ENCODE measurements at regions of chr13 and their contacts with region 1.

Region 1: DNA sequence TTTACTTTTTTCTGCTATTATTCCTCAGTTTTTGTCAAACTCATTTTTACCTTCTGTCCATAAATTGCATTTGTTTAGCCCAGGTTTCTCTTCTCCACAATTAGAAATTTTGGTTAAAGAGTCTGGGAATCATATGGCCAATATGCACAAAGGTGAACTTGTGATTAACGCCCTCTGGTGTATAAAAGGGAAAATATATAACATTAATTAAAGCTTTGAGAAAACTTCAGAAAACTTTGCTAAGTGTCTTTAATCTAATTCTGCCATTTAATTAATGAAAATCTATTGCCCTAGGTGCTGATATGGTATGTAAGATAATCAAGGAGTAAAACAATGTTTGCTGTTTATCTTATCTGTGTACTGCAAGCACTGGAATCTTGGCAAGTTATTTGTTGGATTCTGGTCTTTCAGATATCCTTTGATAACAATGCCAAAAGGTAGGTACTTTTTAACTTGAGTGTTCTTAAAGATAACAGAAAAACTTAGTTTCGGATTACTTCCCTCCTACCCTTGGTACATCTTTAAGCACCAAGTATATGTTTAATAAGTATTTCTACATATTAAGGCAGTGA is 402.6 kb downstream of the SUCLA2 start:
- DNase-seq: peak; percentile 13
- ATAC-seq: no peak
- H3K4me3 ChIP-seq: no peak overlapping the region
- H3K27ac ChIP-seq: no peak overlapping the region
- H3K4me1 ChIP-seq: no peaks in the 10 kb centered on the region; the same call in 1 of the 2 replicates
- H3K27me3 ChIP-seq: no peaks in the 10 kb centered on the region
- CTCF ChIP-seq: peak; percentile 53
- POLR2A ChIP-seq: no peak
- RAD21 ChIP-seq: peak; percentile 59

Region 2: DNA sequence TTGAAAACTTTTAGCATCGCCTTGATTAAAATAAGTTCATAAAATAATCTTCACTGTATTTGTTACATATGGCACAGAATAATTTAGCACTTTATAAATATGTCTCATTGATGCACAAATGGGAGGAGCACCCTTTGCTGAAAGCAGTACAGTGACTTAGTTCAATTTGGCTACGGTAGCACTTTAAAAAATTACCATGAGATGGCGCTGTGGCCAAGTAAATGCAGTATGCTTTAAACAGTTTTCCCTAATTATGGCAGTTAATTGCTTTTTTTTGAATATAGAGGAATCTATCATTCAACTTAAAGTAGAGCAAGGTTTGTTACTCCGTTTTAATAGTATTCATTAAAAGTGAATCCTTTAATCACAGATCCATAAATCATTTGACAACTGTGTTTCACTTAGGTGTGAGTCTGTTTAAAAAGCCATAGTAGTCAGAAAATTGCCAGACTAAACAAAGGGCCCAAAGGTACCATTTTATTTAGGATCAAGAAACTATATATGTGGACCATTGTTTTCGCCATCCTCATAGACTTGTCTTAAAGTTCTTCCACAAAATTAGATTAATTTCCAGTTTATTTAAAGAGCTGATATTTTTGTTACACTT is 766.7 kb before region 1 on chr13:
- CTCF ChIA-PET with region 1: no interaction called
- POLR2A ChIA-PET with region 1: no interaction called
- dilution Hi-C with region 1: no loop called
- in situ Hi-C with region 1: no loop called
- intact Hi-C with region 1: loop called (anchors 2 kb)
- DNase-seq: peak; percentile 58
- ATAC-seq: peak; percentile 79; the same call in 1 of the 2 replicates
- H3K4me3 ChIP-seq: no peak overlapping the region
- H3K27ac ChIP-seq: no peak overlapping the region
- H3K4me1 ChIP-seq: no peaks in the 10 kb centered on the region
- H3K27me3 ChIP-seq: no peaks in the 10 kb centered on the region; the same call in 1 of the 2 replicates
- CTCF ChIP-seq: peak; percentile 90
- POLR2A ChIP-seq: no peak
- RAD21 ChIP-seq: peak; percentile 90

Region 3: GRCh38 chr13:46975173-46975572 is 623.3 kb before region 1 on chr13:
- CTCF ChIA-PET with region 1: interaction called, 5 read pairs
- POLR2A ChIA-PET with region 1: no interaction called
- dilution Hi-C with region 1: no loop called
- in situ Hi-C with region 1: no loop called
- intact Hi-C with region 1: loop called (anchors 1 kb)
- DNase-seq: no peak
- ATAC-seq: no peak
- H3K4me3 ChIP-seq: no peak overlapping the region
- H3K27ac ChIP-seq: no peak overlapping the region
- H3K4me1 ChIP-seq: no peaks in the 10 kb centered on the region
- H3K27me3 ChIP-seq: no peaks in the 10 kb centered on the region
- CTCF ChIP-seq: no peak
- POLR2A ChIP-seq: no peak
- RAD21 ChIP-seq: no peak

Region 4: DNA sequence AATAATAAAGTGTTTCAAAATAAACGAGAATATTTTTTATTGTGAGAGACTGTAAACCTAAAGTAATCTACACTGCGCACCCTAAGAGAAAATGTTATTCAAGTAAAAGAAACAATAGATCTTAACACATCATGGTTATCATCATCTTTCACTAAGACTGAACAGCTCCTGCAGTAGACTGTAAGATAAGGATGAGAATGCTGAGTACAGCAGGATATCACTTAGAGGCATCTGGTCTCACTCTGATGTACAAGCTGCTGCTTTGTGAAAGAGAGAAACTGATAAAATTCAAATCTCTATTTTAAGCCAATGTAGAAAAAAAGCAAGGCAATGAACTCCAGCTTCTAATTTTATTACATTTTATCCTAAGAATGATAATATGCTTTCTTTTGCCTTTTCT is 439.8 kb before region 1 on chr13:
- CTCF ChIA-PET with region 1: no interaction called
- POLR2A ChIA-PET with region 1: no interaction called
- dilution Hi-C with region 1: no loop called
- in situ Hi-C with region 1: no loop called
- intact Hi-C with region 1: no loop called
- DNase-seq: no peak
- ATAC-seq: no peak
- H3K4me3 ChIP-seq: no peak overlapping the region
- H3K27ac ChIP-seq: no peak overlapping the region
- H3K4me1 ChIP-seq: no peaks in the 10 kb centered on the region
- H3K27me3 ChIP-seq: no peaks in the 10 kb centered on the region
- CTCF ChIP-seq: no peak
- POLR2A ChIP-seq: no peak
- RAD21 ChIP-seq: no peak

Region 5: GRCh38 chr13:47420568-47420967 is 177.9 kb before region 1 on chr13:
- CTCF ChIA-PET with region 1: no interaction called
- POLR2A ChIA-PET with region 1: no interaction called
- dilution Hi-C with region 1: no loop called
- in situ Hi-C with region 1: no loop called
- intact Hi-C with region 1: loop called (anchors 1 kb)
- DNase-seq: peak; percentile 49
- ATAC-seq: peak; percentile 54
- H3K4me3 ChIP-seq: no peak overlapping the region
- H3K27ac ChIP-seq: no peak overlapping the region
- H3K4me1 ChIP-seq: peaks cover 3% of the 10 kb centered on the region; the same call in 1 of the 2 replicates
- H3K27me3 ChIP-seq: no peaks in the 10 kb centered on the region
- CTCF ChIP-seq: no peak
- POLR2A ChIP-seq: no peak
- RAD21 ChIP-seq: no peak